Sigmoid colon (tissue), 7 donors: ENCODE measurements at regions of chr3 and their contacts with region 1.

Region 1: GRCh38 chr3:150183678-150184425 is 213.2 kb upstream of the PFN2 start:
- DNase-seq: peak; percentile 84
- H3K4me3 ChIP-seq: peak overlapping the region; percentile 7 to 39 (median 25)
- H3K27ac ChIP-seq: peak overlapping the region in 2 of 4 donors; percentile 2 to 58
- H3K4me1 ChIP-seq: peaks cover 0 to 20% (median 10%) of the 10 kb centered on the region in 4 donors
- H3K27me3 ChIP-seq: no peaks in the 10 kb centered on the region
- CTCF ChIP-seq: peak; percentile 38 to 59 (median 56)
- EP300 ChIP-seq: no peak
- POLR2A ChIP-seq: no peak

Region 2: DNA sequence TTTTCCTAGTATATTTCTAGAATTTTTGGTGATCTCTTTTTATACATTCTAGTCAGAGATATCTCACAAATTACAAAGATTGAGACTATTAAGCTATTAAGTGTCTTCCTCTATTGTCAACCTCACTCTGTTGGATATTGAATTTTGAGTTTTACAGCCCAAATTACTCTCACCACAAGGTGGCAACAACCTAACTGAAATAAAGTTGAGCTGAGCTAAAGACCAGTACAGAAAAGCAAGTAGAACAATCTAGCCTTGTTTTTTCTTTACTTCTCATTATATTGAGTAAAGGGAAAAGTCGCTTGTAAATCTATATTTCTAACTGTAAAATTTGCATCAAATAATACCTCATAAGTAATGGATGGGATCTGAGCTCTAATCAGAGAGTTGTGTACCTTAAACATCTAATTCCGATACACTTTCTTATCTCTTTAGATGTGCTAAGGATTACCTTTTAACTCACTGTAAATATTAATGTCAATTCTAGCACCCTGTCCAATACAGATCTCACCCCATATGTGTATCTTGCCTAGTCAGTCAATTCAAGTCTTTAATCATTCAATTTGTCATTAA is 418.0 kb before region 1 on chr3:
- intact Hi-C with region 1: loop called (anchors 10 kb)
- DNase-seq: no peak
- H3K4me3 ChIP-seq: no peak overlapping the region
- H3K27ac ChIP-seq: no peak overlapping the region
- H3K4me1 ChIP-seq: no peaks in the 10 kb centered on the region
- H3K27me3 ChIP-seq: peaks cover 0 to 10% (median 0%) of the 10 kb centered on the region in 3 donors
- CTCF ChIP-seq: peak in 2 of 4 experiments; percentile 15 to 36
- EP300 ChIP-seq: no peak
- POLR2A ChIP-seq: no peak

Region 3: DNA sequence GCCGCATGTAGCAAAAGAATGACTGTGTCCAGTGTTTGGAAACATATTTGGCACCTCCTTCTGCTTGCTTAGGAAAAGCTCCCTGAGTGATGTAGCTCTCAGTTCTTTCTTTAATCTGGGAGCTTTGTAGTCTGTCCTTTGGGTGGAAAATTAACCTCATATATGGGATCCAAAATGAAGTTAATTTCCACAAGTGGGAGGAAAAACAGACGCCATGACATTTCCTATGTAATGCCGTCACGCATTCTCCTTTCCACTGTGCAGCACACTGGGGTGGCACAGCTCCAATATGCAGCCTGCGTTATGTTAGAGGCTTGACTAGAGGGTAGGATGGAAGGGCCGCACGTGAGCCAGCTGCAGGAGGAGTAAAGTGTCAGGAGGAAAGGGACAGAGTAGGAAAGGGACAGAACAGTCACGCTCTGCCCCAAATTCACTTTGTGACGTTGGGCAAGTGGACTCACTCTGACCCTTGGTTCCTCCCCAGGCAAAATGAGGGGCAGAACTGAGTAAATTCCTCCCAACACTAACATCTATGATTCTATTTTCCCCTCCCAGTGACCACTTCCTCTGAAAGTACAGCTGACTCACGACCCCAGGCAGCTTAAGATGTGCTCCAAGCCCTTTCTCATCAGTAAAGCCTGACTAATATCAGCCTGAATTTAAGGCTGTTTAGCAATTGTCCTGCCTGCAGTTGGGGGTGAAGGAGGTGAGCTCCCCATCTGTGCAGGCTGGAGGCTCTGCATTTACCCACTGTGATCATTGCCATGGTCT is 36.7 kb before region 1 on chr3:
- intact Hi-C with region 1: loop called (anchors 5 kb)
- DNase-seq: peak; percentile 92
- H3K4me3 ChIP-seq: no peak overlapping the region
- H3K27ac ChIP-seq: peak overlapping the region in 3 of 4 donors; percentile 66 to 78 (median 74)
- H3K4me1 ChIP-seq: peaks cover 0 to 40% (median 24%) of the 10 kb centered on the region in 4 donors
- H3K27me3 ChIP-seq: no peaks in the 10 kb centered on the region
- CTCF ChIP-seq: no peak
- EP300 ChIP-seq: peak; percentile 72 to 95 (median 90)
- POLR2A ChIP-seq: no peak